MCF 10A (cell line): ENCODE measurements at regions of chr4 and their contacts with region 1.

Region 1: DNA sequence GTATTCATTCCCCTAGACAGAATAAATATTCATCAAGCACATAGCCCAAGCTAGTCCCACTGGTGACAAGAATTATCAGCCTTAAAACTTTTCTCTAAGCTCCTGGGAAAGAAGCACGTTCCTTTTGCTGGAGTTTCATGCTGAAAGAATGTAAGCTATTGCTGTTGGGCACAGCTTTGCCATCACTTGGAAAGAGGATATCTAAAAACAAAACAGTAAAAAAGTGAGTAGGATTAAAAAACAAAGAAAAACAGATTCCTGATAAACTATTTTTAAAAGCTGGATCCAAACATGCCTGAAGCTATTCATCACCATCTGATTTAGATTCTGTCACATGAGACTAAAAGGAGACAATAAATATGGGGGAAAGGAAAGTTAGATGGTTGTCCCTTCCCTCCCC is 176.8 kb downstream of the SCFD2 start:
- DNase-seq: no peak
- H3K4me3 Mint-ChIP-seq: no peak overlapping the region
- H3K27ac Mint-ChIP-seq: no peak overlapping the region
- H3K4me1 Mint-ChIP-seq: peaks cover 17% of the 10 kb centered on the region
- H3K27me3 Mint-ChIP-seq: no peaks in the 10 kb centered on the region
- CTCF ChIP-seq: no peak

Region 2: DNA sequence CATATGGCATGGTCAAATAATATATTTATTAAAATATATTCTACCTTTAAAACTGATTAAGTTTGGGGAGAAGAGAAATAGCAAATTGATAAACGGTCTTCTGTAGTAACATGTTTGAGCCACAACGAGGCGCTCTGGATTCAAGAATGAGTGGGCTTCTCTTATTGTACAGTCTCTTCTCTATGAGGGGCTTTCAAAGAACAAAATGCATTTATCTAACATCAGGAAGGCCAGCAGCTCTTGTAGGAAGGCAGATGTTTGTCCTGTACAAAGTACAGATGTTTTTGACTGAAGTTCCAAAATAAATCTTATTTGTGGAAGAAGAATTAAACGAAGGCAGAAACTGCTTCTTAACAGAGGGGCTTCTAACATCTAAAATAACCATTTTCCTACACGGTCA is 173.3 kb before region 1 on chr4:
- CTCF ChIA-PET with region 1: no interaction called
- POLR2A ChIA-PET with region 1: interaction called, 3 read pairs
- intact Hi-C with region 1: loop called (anchors 5 kb)
- DNase-seq: peak; percentile 34
- H3K4me3 Mint-ChIP-seq: no peak overlapping the region
- H3K27ac Mint-ChIP-seq: no peak overlapping the region
- H3K4me1 Mint-ChIP-seq: peaks cover 36% of the 10 kb centered on the region
- H3K27me3 Mint-ChIP-seq: no peaks in the 10 kb centered on the region
- CTCF ChIP-seq: peak; percentile 44

Region 3: GRCh38 chr4:53235547-53235946 is 46.5 kb after region 1 on chr4:
- CTCF ChIA-PET with region 1: no interaction called
- POLR2A ChIA-PET with region 1: no interaction called
- intact Hi-C with region 1: no loop called
- DNase-seq: no peak
- H3K4me3 Mint-ChIP-seq: no peak overlapping the region
- H3K27ac Mint-ChIP-seq: no peak overlapping the region
- H3K4me1 Mint-ChIP-seq: peaks cover 8% of the 10 kb centered on the region
- H3K27me3 Mint-ChIP-seq: no peaks in the 10 kb centered on the region
- CTCF ChIP-seq: no peak